ENCODE measurements at regions of chr9 and their contacts with region 1.

Region 1: DNA sequence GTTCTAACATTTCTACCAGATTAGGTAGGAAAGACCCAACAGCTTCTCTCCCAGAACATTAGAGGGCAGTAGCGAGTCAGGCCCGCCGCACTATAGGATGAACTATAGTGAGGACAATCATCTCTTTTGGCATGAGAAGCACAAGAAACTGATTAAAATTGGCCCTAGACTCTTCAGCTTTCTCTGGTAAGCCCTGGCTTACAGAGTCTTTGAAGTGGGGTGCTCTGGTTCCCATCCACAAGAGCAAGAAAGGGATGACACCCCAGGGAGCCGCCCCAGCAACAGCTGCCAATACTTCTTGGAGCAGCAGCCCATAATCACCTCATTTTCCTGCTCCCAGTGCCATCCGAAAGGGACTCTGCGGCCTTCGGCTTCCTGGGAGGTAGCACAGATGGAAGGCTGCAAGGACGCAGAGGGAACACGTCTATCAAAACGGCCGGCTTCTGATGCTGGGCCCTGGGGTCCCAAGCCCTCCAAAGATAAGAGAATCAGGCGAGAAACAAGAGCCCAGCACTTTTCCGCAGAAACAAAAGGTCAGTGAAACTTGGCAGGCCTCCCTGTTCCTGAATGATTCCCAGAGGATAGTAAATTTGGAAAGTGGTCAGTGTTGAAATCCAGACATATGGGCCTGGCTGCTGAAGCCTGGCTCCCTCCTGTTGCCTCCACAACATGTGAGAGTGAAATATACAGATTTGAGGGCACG is 69.3 kb downstream of the HSD17B3 start:
- DNase-seq: no peak
- ATAC-seq: peak; percentile 86
- H3K4me3 ChIP-seq: no peak overlapping the region
- H3K27ac ChIP-seq: no peak overlapping the region
- H3K4me1 ChIP-seq: no peaks in the 10 kb centered on the region
- H3K27me3 ChIP-seq: no peaks in the 10 kb centered on the region
- CTCF ChIP-seq: peak; percentile 75 to 93 (median 90)
- EP300 ChIP-seq: no peak
- POLR2A ChIP-seq: no peak
- RAD21 ChIP-seq: peak; percentile 74

Region 2: DNA sequence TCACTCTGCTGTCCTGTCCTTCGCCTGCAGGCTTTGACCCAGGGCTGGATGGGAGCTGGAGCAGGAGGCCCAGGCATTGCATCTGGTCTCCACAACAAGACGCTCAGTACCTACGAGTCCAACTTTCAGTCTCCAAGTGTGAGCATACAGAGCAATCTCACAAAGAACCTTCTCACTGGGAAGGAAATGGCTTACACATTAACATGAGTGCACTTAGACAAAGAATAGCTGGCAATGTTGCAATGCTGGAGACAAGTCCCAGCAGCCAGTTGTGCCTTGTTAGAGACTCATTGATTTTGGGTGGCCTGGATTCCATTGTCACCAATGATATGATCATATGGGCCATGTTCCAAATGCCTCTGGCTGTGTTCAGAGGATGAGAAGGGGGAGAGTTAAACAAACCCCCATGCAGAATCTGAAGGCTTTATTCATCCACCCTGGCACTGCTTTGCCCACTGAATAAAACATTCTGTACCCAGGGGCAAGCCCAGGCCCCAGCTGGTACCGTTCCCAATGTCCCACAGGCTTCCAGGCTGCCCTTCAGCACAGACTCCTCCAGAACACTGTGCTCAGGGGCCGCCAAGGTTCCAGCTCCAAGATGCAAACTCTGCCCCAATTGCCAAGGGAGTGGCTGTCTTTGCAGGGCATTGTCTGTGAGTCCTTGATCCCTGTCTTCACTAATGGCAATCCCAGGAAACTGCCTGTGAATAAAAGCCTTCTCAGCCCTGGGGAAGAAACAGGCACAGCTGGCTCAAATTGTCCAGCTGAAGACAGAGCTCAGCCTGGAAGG is 116.2 kb before region 1 on chr9:
- CTCF ChIA-PET with region 1: no interaction called
- POLR2A ChIA-PET with region 1: no interaction called
- RAD21 ChIA-PET with region 1: no interaction called
- SMC1A ChIA-PET with region 1: no interaction called
- in situ Hi-C with region 1: no loop called
- intact Hi-C with region 1: no loop called
- DNase-seq: no peak
- ATAC-seq: no peak
- H3K4me3 ChIP-seq: no peak overlapping the region
- H3K27ac ChIP-seq: no peak overlapping the region
- H3K4me1 ChIP-seq: no peaks in the 10 kb centered on the region
- H3K27me3 ChIP-seq: no peaks in the 10 kb centered on the region
- CTCF ChIP-seq: no peak
- EP300 ChIP-seq: no peak
- POLR2A ChIP-seq: no peak
- RAD21 ChIP-seq: no peak

Region 3: GRCh38 chr9:96203867-96204501 is 28.7 kb before region 1 on chr9:
- CTCF ChIA-PET with region 1: no interaction called
- POLR2A ChIA-PET with region 1: no interaction called
- RAD21 ChIA-PET with region 1: no interaction called
- SMC1A ChIA-PET with region 1: no interaction called
- in situ Hi-C with region 1: no loop called
- intact Hi-C with region 1: no loop called
- DNase-seq: no peak
- ATAC-seq: no peak
- H3K4me3 ChIP-seq: no peak overlapping the region
- H3K27ac ChIP-seq: no peak overlapping the region
- H3K4me1 ChIP-seq: no peaks in the 10 kb centered on the region
- H3K27me3 ChIP-seq: no peaks in the 10 kb centered on the region
- CTCF ChIP-seq: no peak
- EP300 ChIP-seq: no peak
- POLR2A ChIP-seq: no peak
- RAD21 ChIP-seq: no peak

Region 4: GRCh38 chr9:96317335-96317980 is 84.8 kb after region 1 on chr9:
- CTCF ChIA-PET with region 1: interaction called, 62 read pairs
- POLR2A ChIA-PET with region 1: no interaction called
- RAD21 ChIA-PET with region 1: interaction called, 13 read pairs
- SMC1A ChIA-PET with region 1: interaction called, 14 read pairs
- in situ Hi-C with region 1: loop called (anchors 5 kb)
- intact Hi-C with region 1: loop called (anchors 1 kb)
- DNase-seq: no peak
- ATAC-seq: peak; percentile 76
- H3K4me3 ChIP-seq: no peak overlapping the region
- H3K27ac ChIP-seq: no peak overlapping the region
- H3K4me1 ChIP-seq: no peaks in the 10 kb centered on the region
- H3K27me3 ChIP-seq: no peaks in the 10 kb centered on the region
- CTCF ChIP-seq: peak; percentile 86 to 87 (median 87)
- EP300 ChIP-seq: no peak
- POLR2A ChIP-seq: no peak
- RAD21 ChIP-seq: peak; percentile 89

Region 5: GRCh38 chr9:96661711-96662110 is 429.0 kb after region 1 on chr9:
- CTCF ChIA-PET with region 1: interaction called, 5 read pairs
- POLR2A ChIA-PET with region 1: no interaction called
- RAD21 ChIA-PET with region 1: no interaction called
- SMC1A ChIA-PET with region 1: interaction called, 4 read pairs
- in situ Hi-C with region 1: no loop called
- intact Hi-C with region 1: loop called (anchors 10 kb)
- DNase-seq: no peak
- ATAC-seq: no peak
- H3K4me3 ChIP-seq: no peak overlapping the region
- H3K27ac ChIP-seq: no peak overlapping the region
- H3K4me1 ChIP-seq: no peaks in the 10 kb centered on the region
- H3K27me3 ChIP-seq: no peaks in the 10 kb centered on the region
- CTCF ChIP-seq: no peak
- EP300 ChIP-seq: no peak
- POLR2A ChIP-seq: no peak
- RAD21 ChIP-seq: no peak